ENCODE measurements at regions of chr4 and their contacts with region 1.

Region 1: GRCh38 chr4:57378766-57379165 is 268.6 kb upstream of the IGFBP7 start:
- DNase-seq: no peak
- H3K4me3 ChIP-seq: no peak overlapping the region
- H3K27ac ChIP-seq: no peak overlapping the region
- H3K4me1 ChIP-seq: no peaks in the 10 kb centered on the region
- H3K27me3 ChIP-seq: no peaks in the 10 kb centered on the region
- CTCF ChIP-seq: no peak
- POLR2A ChIP-seq: no peak

Region 2: DNA sequence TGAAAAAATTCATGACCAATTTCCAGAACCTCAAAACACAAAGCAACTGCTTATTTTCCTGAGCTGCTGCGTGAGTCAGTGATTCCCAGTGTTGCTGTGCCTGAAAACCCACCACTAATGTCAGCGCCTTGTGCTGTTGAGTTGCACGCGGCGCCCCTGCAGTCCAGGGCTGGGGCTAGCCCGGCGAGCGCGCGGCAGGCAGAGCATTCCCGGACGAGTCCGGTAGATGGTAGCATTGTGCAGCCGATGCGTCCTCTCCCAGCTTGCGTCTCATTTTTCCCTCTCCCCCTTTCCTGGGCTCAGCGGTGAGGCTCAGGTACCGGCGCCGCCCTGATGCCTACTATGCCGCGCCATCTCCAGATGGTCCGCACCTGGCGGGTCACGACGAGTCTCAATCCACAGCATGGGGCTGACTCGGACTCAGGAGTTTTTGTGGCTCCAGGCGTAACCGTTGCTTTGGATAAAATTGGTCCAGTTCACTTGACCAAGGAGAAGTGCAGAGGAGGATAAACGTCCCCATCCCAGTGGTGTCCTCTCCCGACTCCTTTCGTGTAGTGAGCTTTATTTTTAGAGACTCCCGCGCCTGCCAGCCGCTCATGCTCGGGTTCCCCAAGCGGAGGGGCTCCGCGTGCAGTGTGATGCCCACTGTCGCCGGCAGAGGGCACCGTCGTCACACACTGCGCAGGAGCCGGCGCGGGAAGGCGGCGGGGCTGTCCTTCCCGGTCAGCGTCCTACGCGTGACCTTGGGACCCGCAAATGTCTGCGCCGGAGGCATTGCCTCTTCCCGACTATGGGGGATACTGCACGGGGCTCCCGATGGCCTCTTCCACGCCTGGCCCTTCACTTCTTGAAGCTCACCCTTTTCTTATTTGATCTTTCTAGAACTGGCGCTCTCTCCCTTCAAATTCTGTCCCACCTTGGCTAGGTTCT is 215.0 kb before region 1 on chr4:
- intact Hi-C with region 1: loop called (anchors 5 kb)
- DNase-seq: peak; percentile 49 to 67
- H3K4me3 ChIP-seq: peak overlapping the region; percentile 43 to 75 (median 57)
- H3K27ac ChIP-seq: peak overlapping the region; percentile 17 to 65
- H3K4me1 ChIP-seq: no peaks in the 10 kb centered on the region
- H3K27me3 ChIP-seq: no peaks in the 10 kb centered on the region
- CTCF ChIP-seq: peak; percentile 81 to 85 (median 82)
- POLR2A ChIP-seq: no peak